ENCODE measurements at regions of chr4 and their contacts with region 1.

Region 1: DNA sequence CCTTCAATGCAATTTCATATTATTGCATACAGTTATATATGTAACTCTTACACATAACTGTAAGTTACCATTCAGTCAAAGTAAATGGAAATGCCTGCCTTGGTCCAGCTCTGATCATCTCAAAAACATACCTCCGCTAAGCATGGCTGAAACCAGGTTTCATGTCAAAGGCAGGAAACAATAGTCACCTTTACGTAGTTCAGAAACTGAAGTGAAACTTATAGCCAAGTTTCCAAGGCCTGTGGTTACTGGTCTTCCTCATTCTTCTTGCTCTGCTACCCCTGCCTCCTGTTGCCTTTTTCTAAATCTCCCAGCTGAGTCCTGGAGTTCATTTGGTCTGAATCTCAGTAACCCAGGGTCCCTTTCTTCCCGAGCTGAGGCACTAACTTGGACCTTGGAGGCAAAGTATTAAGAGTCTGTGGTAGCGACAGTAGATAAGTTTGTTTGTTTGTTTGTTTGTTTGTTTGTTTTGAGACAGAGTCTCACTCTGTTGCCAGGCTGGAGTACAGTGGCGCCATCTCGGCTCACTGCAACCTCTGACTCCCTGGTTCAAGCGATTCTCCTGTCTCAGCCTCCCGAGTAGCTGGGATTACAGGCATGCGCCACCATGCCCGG is 30.8 kb downstream of the DAPP1 start:
- DNase-seq: peak; percentile 84
- H3K4me3 Mint-ChIP-seq: peak overlapping the region; percentile 58
- H3K27ac Mint-ChIP-seq: peak overlapping the region; percentile 92
- H3K4me1 Mint-ChIP-seq: peaks cover 67% of the 10 kb centered on the region
- H3K27me3 Mint-ChIP-seq: no peaks in the 10 kb centered on the region

Region 2: GRCh38 chr4:98482847-98483806 is 1364.3 kb before region 1 on chr4:
- intact Hi-C with region 1: loop called (anchors 10 kb)
- DNase-seq: peak; percentile 75
- H3K4me3 Mint-ChIP-seq: peak overlapping the region; percentile 80
- H3K27ac Mint-ChIP-seq: peak overlapping the region; percentile 99
- H3K4me1 Mint-ChIP-seq: peaks cover 79% of the 10 kb centered on the region
- H3K27me3 Mint-ChIP-seq: no peaks in the 10 kb centered on the region

Region 3: DNA sequence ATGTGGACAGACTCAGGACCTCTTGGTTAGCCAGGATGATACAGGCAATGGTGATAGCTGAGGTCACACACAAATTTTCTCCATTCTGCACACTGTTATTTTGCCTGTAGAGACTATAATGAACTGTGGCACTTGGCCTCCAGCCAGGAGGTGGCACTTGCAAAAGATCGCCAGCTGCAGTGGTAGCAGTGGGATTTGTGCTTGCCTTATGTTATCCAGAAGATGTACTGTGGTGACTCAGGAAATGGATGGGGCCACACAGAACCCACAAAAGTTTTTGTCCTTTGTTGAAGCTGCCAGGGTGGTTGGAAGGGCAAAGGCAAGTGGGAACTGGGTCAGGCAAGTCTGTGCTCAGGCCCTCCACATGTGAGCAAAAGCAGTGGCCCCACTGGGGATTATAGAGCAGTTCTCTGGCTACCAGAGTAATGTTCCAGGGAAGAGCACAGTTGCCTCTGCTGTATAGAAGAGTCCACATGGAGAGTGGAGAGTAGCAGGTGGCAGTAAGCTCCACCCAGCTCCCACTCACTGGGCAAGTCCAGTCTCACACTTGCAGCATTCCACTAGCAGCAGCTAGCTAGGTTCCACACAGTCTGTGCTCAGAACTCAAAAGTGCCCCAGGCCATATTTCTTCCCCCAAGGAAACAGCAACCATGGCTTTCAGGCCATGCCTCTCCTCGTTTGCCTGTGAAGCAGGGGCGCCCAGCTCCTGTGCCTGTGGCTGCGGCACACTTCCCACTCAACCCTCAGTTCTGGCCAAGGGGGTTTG is 342.5 kb before region 1 on chr4:
- intact Hi-C with region 1: loop called (anchors 5 kb)
- DNase-seq: no peak
- H3K4me3 Mint-ChIP-seq: no peak overlapping the region
- H3K27ac Mint-ChIP-seq: peak overlapping the region; percentile 45
- H3K4me1 Mint-ChIP-seq: peaks cover 34% of the 10 kb centered on the region
- H3K27me3 Mint-ChIP-seq: no peaks in the 10 kb centered on the region

Region 4: GRCh38 chr4:99816545-99817308 is 30.7 kb before region 1 on chr4 and contains the start of gene DAPP1:
- intact Hi-C with region 1: loop called (anchors 1 kb)
- DNase-seq: peak; percentile 95
- H3K4me3 Mint-ChIP-seq: peak within 1 kb of the TSS; percentile 95
- H3K27ac Mint-ChIP-seq: peak within 1 kb of the TSS; percentile 97
- H3K4me1 Mint-ChIP-seq: peaks cover 70% of the 10 kb centered on the region
- H3K27me3 Mint-ChIP-seq: no peaks in the 10 kb centered on the region
- total RNA-seq, gene DAPP1: 28.4 and 29.5 TPM in 2 replicates

Region 5: DNA sequence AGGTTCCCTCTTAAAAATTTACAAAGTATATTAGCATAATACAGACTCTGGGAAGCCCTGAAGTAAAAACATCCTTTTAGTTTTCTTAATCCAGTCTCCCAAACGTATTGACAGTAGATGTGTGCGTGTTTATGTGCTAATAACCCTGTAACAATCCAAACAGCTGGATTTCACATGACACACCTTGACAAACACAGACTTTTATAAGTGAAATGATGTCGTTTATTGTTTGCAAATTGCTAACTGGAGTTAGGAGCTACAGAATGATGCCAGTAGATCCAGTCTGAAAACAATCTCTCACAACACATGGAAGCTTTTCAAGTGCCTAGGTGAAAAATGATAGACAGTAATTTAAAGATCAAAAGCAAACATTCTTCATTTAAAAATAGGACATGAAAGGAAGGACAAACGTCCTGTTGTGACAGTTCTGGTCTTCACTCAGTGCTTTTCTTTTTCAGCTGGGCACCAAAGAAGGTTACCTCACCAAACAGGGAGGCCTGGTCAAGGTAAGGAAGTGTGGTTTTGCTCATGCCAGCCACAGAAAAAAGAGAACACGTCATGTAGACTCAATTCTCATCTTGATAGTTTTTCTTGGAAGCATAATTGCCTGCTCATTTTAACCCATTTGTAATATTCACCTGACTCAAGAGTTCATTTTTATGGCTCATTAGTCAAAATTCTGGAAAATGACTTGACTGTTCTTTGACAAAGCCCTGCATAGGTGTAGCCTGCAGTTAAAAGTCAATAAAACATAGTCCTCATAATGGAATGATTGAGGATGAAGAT is 13.8 kb after region 1 on chr4:
- intact Hi-C with region 1: loop called (anchors 1 kb)
- DNase-seq: peak; percentile 69
- H3K4me3 Mint-ChIP-seq: peak overlapping the region; percentile 15
- H3K27ac Mint-ChIP-seq: peak overlapping the region; percentile 80
- H3K4me1 Mint-ChIP-seq: peaks cover 31% of the 10 kb centered on the region
- H3K27me3 Mint-ChIP-seq: no peaks in the 10 kb centered on the region

Region 6: DNA sequence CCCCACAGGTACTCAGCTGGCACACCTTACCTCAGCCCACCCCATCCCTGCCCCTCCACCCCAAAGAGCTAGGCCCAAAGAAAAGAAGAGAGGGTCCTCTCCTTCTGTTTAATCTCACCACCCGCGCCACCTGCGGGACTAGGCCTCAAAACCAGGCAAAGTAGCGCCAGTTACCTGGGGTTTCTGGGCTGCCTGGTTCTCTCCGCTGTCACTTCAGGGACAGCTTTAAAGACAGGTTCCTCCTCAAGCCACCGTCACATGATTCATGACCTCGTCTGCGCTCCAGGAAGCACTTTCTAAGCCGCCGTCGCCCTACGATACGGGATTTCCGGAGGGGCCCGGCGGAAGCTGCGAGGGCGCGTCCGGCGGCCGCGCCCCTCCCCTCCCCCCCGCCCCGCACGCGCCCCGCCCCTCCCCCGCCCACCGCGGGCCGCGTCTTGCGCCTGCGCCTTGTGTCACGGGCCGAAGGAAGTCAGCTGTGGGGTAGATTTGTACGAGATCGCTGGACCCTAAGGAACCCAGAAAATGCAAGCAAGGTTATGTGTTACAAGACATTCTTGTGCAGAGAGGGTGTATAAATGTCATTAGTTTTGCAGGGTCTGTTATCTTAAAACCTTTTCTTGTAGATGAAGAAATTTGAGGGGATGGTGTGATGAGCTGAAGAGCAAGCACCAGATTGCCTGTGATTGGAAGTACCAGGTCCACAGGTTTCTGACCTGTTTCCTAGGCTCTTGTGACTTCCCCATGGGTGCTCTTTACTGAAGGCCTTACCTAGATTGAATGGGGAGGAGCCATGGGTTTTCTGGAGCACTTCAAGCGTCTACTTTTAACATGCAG is 46.9 kb after region 1 on chr4 and contains the start of gene LAMTOR3:
- intact Hi-C with region 1: loop called (anchors 1 kb)
- DNase-seq: peak; percentile 96
- H3K4me3 Mint-ChIP-seq: peak within 1 kb of the TSS; percentile 94
- H3K27ac Mint-ChIP-seq: peak within 1 kb of the TSS; percentile 94
- H3K4me1 Mint-ChIP-seq: peaks cover 32% of the 10 kb centered on the region
- H3K27me3 Mint-ChIP-seq: no peaks in the 10 kb centered on the region
- total RNA-seq, gene LAMTOR3: 28.0 and 32.8 TPM in 2 replicates

Region 7: DNA sequence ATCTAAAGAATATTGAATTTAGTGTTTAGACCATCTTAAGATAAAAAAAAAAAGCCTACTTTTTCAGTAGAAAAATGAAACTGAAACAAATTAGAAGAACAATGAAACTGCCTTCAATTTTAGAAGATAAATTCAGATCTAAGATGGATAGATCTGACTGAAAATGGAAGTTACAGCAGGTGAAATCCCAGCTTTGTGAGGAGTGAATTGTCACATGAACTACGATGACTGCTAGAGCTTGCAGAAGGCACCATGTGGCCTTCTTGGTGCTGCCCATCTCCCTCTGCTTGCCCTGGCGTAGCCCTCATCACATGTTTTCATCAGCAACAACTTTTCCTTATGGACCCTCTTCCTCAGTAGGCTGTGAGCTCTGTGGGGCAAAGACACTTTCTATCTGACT is 721.7 kb after region 1 on chr4:
- intact Hi-C with region 1: loop called (anchors 5 kb)
- DNase-seq: peak; percentile 61
- H3K4me3 Mint-ChIP-seq: peak overlapping the region; percentile 57
- H3K27ac Mint-ChIP-seq: peak overlapping the region; percentile 47
- H3K4me1 Mint-ChIP-seq: peaks cover 13% of the 10 kb centered on the region
- H3K27me3 Mint-ChIP-seq: no peaks in the 10 kb centered on the region

Measured in activated CD4-positive, alpha-beta T cell treated with anti-CD3 and anti-CD28 coated beads, Interleukin-2, amount 10 ng/mL, durations not matched to agents 24 days and 14 days (primary cell).